ENCODE measurements at regions of chr3 and their contacts with region 1.

Region 1: GRCh38 chr3:188954590-188955208 is 217.1 kb upstream of the TPRG1 start:
- DNase-seq: peak; percentile 68
- ATAC-seq: peak; percentile 92
- H3K4me3 ChIP-seq: no peak overlapping the region
- H3K27ac ChIP-seq: no peak overlapping the region
- H3K4me1 ChIP-seq: peaks cover 32% of the 10 kb centered on the region
- H3K27me3 ChIP-seq: no peaks in the 10 kb centered on the region
- CTCF ChIP-seq: peak; percentile 97
- EP300 ChIP-seq: no peak; a peak in 1 of 4 replicates
- POLR2A ChIP-seq: no peak
- RAD21 ChIP-seq: peak; percentile 94

Region 2: DNA sequence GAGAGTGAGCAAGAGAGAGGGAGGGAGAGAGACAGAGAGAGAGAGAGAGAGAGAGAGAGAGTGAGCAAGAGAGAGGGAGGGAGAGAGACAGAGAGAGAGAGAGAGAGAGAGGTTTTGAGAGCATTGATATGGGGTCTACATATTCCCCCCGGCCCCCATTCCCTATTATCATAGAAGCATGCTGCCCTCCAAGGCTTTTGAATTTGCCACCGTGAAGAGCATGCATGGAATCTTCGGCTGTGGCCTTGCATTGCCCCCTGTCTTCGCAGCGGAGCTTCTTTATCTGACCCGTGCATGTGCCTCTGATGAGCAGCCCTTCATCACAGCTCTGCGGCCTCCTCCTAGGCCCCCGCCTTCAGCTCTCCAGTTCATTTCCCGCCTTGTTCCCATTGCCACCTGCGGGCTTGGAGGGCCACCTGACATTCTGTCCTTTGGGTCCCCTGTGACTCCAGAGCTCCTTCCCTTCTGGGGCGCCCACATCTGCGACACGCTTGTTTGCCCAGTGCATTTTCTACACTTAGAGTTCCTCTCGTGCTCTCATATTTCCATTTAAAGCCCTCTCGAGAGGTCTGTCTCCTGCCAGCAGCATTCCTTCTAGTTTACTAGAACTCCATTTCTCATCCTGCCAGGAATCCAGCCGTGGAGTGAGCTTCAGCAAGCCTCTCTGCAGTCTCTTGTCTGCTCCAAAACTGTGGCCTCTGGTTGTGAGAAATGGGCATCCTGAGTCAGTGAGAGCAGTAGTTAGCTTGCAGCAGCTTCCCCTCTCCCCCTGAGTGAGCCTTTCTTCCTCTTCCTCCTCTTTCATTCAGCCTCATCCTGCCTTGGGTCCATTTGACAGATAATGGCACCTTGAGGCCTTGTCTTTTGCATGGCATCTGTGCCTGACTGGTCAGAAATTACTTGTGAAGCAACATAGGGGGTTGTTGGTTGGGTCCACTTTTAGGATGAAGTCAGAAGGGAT is 775.4 kb before region 1 on chr3:
- CTCF ChIA-PET with region 1: no interaction called
- POLR2A ChIA-PET with region 1: no interaction called
- in situ Hi-C with region 1: no loop called
- intact Hi-C with region 1: loop called (anchors 10 kb)
- DNase-seq: no peak
- ATAC-seq: no peak
- H3K4me3 ChIP-seq: no peak overlapping the region
- H3K27ac ChIP-seq: no peak overlapping the region
- H3K4me1 ChIP-seq: peaks cover 49% of the 10 kb centered on the region
- H3K27me3 ChIP-seq: no peaks in the 10 kb centered on the region
- CTCF ChIP-seq: no peak
- EP300 ChIP-seq: no peak
- POLR2A ChIP-seq: no peak
- RAD21 ChIP-seq: no peak

Region 3: DNA sequence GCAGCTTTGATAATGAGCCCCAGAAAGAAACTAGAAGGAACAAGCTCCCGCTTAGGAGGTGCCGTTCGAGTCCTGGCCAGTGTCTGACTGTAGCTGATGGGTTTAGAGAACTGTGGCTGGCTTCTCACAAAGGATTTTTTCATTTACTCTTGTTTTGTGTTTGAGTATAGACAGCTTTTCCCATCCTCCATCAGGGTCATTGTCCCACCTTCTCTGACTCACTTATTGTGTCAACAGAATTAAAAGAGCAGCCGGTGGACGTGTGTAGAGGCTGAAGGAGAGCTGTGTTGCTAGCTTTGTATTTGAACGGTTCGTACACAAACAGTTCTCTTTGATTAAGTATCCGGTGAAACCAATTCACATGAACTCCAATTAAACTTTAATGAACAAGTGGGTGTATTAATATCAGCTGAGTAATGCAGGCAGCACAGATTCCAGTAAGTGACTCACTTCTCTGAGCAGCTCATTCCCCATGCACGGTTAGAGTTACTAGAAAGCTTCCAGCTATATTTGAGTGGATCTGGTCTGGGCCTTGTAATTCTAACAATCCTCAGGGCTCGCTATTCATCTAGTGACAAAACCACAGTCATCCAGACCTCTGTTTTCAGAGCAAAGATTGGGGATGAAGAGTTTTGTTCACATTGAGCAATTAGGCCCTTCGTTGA is 659.7 kb before region 1 on chr3:
- CTCF ChIA-PET with region 1: no interaction called
- POLR2A ChIA-PET with region 1: interaction called, 4 read pairs
- in situ Hi-C with region 1: loop called (anchors 10 kb)
- intact Hi-C with region 1: loop called (anchors 5 kb)
- DNase-seq: peak; percentile 99
- ATAC-seq: peak; percentile 90
- H3K4me3 ChIP-seq: peak overlapping the region in 1 of 3 experiments; percentile 45; a peak in 2 of 6 replicates
- H3K27ac ChIP-seq: peak overlapping the region; percentile 94
- H3K4me1 ChIP-seq: peaks cover 99% of the 10 kb centered on the region
- H3K27me3 ChIP-seq: no peaks in the 10 kb centered on the region
- CTCF ChIP-seq: no peak
- EP300 ChIP-seq: peak; percentile 90 to 96; a peak in 3 of 4 replicates
- POLR2A ChIP-seq: peak; percentile 48 to 74; a peak in 3 of 4 replicates
- RAD21 ChIP-seq: peak; percentile 37; the same call in 1 of the 2 replicates

Region 4: DNA sequence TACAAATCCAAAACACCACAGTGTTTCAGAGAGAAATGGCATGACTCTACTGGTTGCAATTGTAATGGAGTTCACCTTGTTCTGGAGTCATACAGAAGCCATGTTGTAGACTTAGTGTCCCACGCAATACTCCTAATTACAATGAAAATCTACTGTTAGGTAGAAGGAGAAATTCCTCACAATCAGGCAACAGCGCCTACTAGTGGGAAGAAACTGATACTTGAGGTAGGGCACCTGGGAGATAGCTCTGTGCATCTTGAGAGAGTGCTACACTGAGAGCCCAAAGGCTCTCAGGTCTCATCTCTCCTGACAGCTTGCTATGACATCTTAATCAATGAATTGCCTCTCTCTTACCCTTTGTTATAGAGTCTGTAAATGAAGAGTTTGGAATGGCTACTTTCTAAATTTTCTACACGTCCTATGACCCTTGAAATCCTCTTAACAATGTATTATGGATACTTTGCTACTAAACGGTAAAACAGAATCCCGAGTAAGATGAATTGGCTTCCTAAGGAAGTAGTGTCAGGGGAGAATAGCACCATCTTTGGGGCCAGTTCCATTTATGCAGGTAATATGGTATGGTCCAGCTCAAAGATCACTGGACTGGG is 205.6 kb before region 1 on chr3:
- CTCF ChIA-PET with region 1: no interaction called
- POLR2A ChIA-PET with region 1: interaction called, 3 read pairs
- in situ Hi-C with region 1: no loop called
- intact Hi-C with region 1: loop called (anchors 10 kb)
- DNase-seq: no peak
- ATAC-seq: no peak
- H3K4me3 ChIP-seq: no peak overlapping the region
- H3K27ac ChIP-seq: peak overlapping the region; percentile 99
- H3K4me1 ChIP-seq: peaks cover 61% of the 10 kb centered on the region
- H3K27me3 ChIP-seq: no peaks in the 10 kb centered on the region
- CTCF ChIP-seq: no peak
- EP300 ChIP-seq: no peak
- POLR2A ChIP-seq: no peak
- RAD21 ChIP-seq: no peak

Measured in HepG2 (cell line).